Naive thymus-derived CD4-positive, alpha-beta T cell (primary cell): ENCODE measurements at regions of chr2 and their contacts with region 1.

Region 1: GRCh38 chr2:222424729-222425671 is 657 bp downstream of the SGPP2 start:
- DNase-seq: peak in 2 of 9 donors; percentile 9 to 48
- ATAC-seq: peak; percentile 54
- H3K4me3 ChIP-seq: peak overlapping the region; percentile 48
- H3K4me3 Mint-ChIP-seq: peak overlapping the region; percentile 48 to 90 (median 68)
- H3K27ac ChIP-seq: no peak overlapping the region
- H3K27ac Mint-ChIP-seq: peak overlapping the region in 1 of 9 donors; percentile 79
- H3K4me1 ChIP-seq: peaks cover 0 to 5% of the 10 kb centered on the region in 2 donors
- H3K4me1 Mint-ChIP-seq: peaks cover 7 to 43% (median 17%) of the 10 kb centered on the region in 7 donors
- H3K27me3 ChIP-seq: no peaks in the 10 kb centered on the region
- H3K27me3 Mint-ChIP-seq: peaks cover 46 to 72% (median 66%) of the 10 kb centered on the region in 5 donors

Region 2: DNA sequence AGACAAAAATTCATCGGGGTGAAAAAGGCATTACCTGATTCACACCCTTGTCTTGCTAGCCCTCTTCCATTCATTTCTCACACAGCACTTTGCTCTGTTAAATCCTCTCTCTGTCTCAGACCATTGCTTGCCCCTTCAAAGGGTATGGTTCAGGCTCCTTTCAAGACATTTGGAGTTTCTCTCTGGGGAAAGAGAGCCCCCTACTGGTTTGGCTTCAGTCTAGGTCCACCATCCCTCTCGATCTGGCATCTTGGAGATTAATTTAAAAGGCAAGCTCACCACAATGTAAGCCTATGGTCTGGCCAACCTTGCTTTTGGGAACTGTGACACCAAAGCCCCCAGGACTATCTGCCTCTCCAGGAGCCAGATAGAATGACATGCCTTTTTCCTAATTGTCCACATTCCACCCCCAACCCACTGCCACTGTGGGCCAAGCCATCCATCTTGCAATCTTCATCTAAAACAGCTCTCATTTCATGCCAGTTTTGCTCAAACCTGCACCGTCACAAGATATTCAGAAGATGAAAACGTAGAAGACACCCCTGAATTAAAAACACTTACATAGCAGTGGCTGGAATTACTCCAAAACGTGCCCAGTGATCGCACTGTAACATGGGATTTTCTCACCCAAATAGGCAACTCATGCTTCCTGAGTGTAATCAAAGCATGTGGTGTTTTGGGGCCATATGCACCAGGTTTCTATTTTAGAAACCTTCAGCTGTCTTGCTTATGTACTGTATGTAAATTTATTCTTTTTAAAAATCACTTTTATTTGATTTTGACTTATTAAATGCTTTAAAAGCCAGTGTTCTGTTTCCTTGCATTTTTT is 137.0 kb after region 1 on chr2:
- CTCF ChIA-PET with region 1: no interaction called
- POLR2A ChIA-PET with region 1: no interaction called
- intact Hi-C with region 1: loop called in 1 of 2 experiments (anchors 5 kb)
- DNase-seq: peak in 1 of 9 donors; percentile 5
- ATAC-seq: peak; percentile 52
- H3K4me3 ChIP-seq: no peak overlapping the region
- H3K4me3 Mint-ChIP-seq: no peak overlapping the region
- H3K27ac ChIP-seq: no peak overlapping the region
- H3K27ac Mint-ChIP-seq: no peak overlapping the region
- H3K4me1 ChIP-seq: no peaks in the 10 kb centered on the region
- H3K4me1 Mint-ChIP-seq: peaks cover 0 to 2% (median 0%) of the 10 kb centered on the region in 7 donors
- H3K27me3 ChIP-seq: no peaks in the 10 kb centered on the region
- H3K27me3 Mint-ChIP-seq: peaks cover 0 to 2% (median 0%) of the 10 kb centered on the region in 5 donors

Region 3: DNA sequence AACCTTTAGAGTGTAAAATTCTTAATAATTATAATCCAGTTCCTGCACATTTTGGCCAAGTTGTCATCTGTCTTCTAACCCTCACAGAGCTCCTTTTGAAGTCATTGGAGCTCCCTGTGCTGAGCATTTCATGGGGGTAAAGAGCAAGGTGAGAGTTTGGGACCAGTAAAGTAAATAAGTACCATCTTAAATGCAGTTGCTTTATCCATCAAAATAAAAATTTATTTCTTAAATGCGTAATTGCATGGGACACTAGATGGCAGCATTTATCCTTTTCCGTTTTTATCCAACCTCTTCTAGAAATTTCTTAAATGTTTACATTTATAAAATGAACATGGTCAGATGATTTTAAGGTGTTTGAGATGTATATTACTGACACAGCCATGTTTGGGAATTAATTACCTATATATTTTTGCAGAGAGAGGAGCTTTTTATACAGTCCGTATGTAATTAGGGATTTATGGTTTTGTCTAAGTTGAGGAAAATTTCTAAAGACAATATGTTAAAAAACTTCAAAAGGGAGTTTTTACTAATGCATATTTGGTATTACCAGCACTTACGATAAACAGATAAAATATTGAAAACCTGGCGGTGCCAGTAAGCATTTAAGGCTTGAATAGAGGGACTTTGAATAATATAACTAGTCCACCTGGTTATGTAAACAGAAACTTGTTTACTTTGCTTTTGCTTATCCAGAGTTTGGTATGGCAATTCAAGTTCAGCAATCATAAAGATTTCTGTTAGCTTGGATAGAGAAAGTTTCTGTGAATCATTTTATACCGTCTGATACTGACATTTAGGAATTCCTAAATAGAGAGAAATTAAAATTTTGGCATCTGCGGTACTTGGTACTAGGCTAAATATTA is 490.3 kb after region 1 on chr2:
- CTCF ChIA-PET with region 1: interaction called, 11 read pairs
- POLR2A ChIA-PET with region 1: no interaction called
- intact Hi-C with region 1: no loop called
- DNase-seq: no peak
- ATAC-seq: no peak
- H3K4me3 ChIP-seq: no peak overlapping the region
- H3K4me3 Mint-ChIP-seq: no peak overlapping the region
- H3K27ac ChIP-seq: no peak overlapping the region
- H3K27ac Mint-ChIP-seq: no peak overlapping the region
- H3K4me1 ChIP-seq: no peaks in the 10 kb centered on the region
- H3K4me1 Mint-ChIP-seq: peaks cover 11 to 27% (median 20%) of the 10 kb centered on the region in 7 donors
- H3K27me3 ChIP-seq: no peaks in the 10 kb centered on the region
- H3K27me3 Mint-ChIP-seq: no peaks in the 10 kb centered on the region